ENCODE measurements at regions of chr6 and their contacts with region 1.

Region 1: DNA sequence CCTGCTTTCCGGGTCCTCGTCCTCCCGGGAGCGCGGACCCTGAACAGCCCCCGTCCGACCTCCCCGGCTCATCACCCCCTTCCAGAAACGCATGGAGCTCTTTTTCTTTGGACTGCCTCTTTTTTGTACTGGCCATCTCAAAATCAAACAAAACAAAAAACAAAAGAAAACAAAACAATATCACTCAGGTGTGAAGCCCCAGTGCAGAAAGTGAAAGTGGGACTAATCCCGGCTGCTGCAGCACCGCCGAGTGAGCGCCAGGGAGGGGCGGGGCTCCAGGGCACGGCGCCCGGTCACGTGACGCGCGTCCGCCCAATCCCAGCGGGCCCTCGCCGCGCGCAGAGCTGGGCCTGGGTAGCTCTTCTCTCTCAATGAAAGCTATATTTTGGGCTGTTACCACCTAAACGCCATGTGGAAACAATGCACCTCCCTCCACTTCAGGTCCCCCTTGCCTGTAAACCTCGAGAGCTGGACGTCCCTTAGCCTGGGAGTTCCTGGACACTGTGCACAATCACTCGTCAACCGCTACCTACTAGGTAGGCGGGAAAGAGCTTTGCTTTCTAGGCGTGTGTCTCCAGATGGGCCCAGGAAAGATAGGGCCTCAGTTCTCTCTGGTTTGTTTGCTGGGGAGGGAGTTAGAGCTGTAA is 93.7 kb upstream of the PRDM1 start:
- DNase-seq: peak; percentile 92
- H3K4me3 Mint-ChIP-seq: peak overlapping the region; percentile 88
- H3K27ac Mint-ChIP-seq: peak overlapping the region; percentile 81
- H3K4me1 Mint-ChIP-seq: peaks cover 32% of the 10 kb centered on the region
- H3K27me3 Mint-ChIP-seq: peaks cover 39% of the 10 kb centered on the region

Region 2: GRCh38 chr6:105748737-105749161 is 243.7 kb before region 1 on chr6:
- CTCF ChIA-PET with region 1: no interaction called
- POLR2A ChIA-PET with region 1: no interaction called
- intact Hi-C with region 1: loop called (anchors 5 kb)
- DNase-seq: peak; percentile 11
- H3K4me3 Mint-ChIP-seq: no peak overlapping the region
- H3K27ac Mint-ChIP-seq: no peak overlapping the region
- H3K4me1 Mint-ChIP-seq: peaks cover 19% of the 10 kb centered on the region
- H3K27me3 Mint-ChIP-seq: peaks cover 11% of the 10 kb centered on the region

Region 3: GRCh38 chr6:105810105-105810921 is 182.1 kb before region 1 on chr6:
- CTCF ChIA-PET with region 1: no interaction called
- POLR2A ChIA-PET with region 1: no interaction called
- intact Hi-C with region 1: loop called (anchors 5 kb)
- DNase-seq: peak; percentile 82
- H3K4me3 Mint-ChIP-seq: no peak overlapping the region
- H3K27ac Mint-ChIP-seq: peak overlapping the region; percentile 53
- H3K4me1 Mint-ChIP-seq: peaks cover 42% of the 10 kb centered on the region
- H3K27me3 Mint-ChIP-seq: peaks cover 10% of the 10 kb centered on the region

Region 4: DNA sequence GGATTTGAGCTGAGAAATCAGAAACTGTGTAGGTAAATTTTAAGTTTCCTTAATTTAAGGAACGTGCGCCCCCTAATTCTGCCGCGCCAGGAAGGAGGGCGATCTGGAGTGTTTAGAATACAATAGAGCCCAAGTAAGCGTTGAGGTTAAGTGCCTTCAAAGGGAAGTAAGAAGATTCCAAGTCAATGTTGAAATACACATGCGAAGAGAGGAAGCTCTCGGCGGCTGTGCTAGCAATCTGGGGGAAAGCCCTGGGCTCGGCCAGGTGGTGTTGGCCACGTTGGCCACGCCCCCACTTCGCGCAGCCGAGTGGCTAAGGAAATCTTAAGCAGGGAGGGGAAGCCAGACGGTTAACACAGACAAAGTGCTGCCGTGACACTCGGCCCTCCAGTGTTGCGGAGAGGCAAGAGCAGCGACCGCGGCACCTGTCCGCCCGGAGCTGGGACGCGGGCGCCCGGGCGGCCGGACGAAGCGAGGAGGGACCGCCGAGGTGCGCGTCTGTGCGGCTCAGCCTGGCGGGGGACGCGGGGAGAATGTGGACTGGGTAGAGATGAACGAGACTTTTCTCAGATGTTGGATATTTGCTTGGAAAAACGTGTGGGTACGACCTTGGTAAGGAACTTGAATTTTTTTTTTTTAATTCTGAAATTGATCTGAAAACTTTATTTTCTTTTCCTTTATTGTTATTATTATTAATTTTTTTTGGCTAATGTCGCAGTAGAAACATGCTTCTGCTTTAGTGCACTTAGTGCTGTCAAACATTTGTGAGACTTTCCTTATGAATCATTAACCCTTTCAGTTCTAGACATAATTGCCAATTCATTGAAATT is 93.8 kb after region 1 on chr6 and contains the start of gene PRDM1:
- CTCF ChIA-PET with region 1: interaction called, 19 read pairs
- POLR2A ChIA-PET with region 1: interaction called, 8 read pairs
- intact Hi-C with region 1: loop called (anchors 1 kb)
- DNase-seq: peak; percentile 89
- H3K4me3 Mint-ChIP-seq: peak within 1 kb of the TSS; percentile 90
- H3K27ac Mint-ChIP-seq: peak within 1 kb of the TSS; percentile 94
- H3K4me1 Mint-ChIP-seq: peaks cover 73% of the 10 kb centered on the region
- H3K27me3 Mint-ChIP-seq: peaks cover 2% of the 10 kb centered on the region
- total RNA-seq, gene PRDM1: 70.9 to 78.9 TPM

Region 5: GRCh38 chr6:107009499-107009898 is 1017.1 kb after region 1 on chr6:
- CTCF ChIA-PET with region 1: no interaction called
- POLR2A ChIA-PET with region 1: no interaction called
- intact Hi-C with region 1: no loop called
- DNase-seq: no peak
- H3K4me3 Mint-ChIP-seq: no peak overlapping the region
- H3K27ac Mint-ChIP-seq: no peak overlapping the region
- H3K4me1 Mint-ChIP-seq: no peaks in the 10 kb centered on the region
- H3K27me3 Mint-ChIP-seq: peaks cover 5% of the 10 kb centered on the region